Pancreas (tissue), 10 donors: ENCODE measurements at regions of chr7 and their contacts with region 1.

Region 1: DNA sequence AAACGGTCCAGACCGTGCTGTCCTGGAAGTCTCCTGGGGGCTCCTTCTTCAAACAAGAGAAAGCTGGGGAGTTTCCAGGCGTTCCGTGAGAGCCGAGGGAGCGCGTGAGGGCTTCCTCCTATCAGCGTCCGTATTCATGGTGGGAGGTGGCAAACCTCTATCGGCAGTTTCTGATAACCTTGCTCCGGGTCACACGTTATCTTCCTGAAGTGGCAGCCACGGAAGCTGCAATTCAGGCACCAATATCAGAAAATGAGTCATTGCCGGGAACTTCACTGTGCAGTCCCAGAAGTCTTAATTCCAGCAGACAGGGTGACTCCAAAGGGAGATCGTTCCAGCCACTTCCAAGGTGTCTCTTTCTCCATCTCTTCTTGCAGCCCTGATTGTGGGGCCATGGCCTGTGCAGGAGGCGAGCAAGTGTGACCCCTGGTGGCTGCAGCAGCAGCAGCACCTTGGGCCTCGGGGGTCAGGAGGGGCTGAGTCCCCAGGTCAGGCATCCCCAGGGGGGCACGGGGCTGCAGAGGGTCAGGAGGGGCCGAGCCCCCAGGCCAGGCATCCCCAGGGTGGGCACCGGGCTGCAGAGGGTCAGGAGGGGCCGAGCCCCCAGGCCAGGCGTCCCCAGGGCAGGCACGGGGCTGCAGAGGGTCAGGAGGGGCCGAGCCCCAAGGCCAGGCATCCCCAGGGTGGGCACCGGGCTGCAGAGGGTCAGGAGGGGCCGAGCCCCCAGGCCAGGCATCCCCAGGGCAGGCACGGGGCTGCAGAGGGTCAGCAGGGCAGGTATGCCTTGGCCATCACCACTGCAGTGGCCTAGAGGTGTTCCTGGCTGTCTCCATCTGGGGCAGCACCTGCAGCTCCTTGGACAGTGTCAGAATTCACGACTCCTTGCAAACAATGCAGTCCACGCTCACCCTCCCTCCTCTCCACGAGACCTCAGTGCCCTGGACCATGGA is 538.7 kb downstream of the DNAJB6 start:
- DNase-seq: no peak
- ATAC-seq: peak in 3 of 4 donors; percentile 36 to 70 (median 70)
- H3K4me3 ChIP-seq: no peak overlapping the region
- H3K27ac ChIP-seq: no peak overlapping the region
- H3K4me1 ChIP-seq: no peaks in the 10 kb centered on the region
- H3K27me3 ChIP-seq: no peaks in the 10 kb centered on the region
- CTCF ChIP-seq: peak in 3 of 4 donors; percentile 13 to 22 (median 21)

Region 2: GRCh38 chr7:157432957-157433576 is 442.4 kb before region 1 on chr7:
- intact Hi-C with region 1: loop called in 1 of 3 experiments (anchors 10 kb)
- DNase-seq: peak in 2 of 6 donors; percentile 34 to 61
- ATAC-seq: peak in 3 of 4 donors; percentile 72 to 77 (median 73)
- H3K4me3 ChIP-seq: peak overlapping the region in 1 of 4 donors; percentile 20
- H3K27ac ChIP-seq: no peak overlapping the region
- H3K4me1 ChIP-seq: no peaks in the 10 kb centered on the region
- H3K27me3 ChIP-seq: no peaks in the 10 kb centered on the region
- CTCF ChIP-seq: peak in 3 of 4 donors; percentile 34 to 53 (median 42)

Region 3: DNA sequence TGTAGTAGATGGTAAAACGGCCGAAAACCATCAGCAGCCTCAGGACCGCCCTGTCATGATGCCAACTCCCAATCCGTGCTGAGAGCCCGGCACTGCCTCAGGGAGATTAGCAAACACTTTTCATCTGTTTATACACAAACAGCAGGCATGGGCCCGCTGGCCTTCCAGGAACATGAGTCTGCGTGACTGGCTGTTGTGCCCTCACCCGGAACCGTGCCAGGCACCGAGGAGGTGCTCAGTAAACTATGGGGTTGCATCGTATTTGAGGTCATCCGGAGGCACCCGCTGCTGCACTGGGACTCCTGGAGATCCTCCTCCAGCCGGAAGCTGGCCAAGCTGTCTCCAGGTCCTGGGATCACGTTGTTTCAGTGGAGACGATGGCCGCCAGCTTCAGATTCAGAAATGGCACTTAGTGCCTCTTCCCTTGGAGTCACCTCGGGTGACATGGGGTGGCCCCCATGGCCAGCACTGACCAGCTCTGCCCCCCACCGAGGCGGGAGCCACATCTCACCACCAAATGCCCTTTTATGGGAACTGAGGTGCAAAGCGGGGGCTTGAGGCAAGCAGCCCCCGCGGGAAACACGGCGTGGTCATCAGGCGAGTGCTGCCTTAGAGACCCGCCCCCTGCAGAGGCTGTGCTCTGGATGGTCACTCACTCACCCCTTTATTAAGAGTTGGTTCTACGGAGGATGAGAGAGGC is 126.3 kb after region 1 on chr7:
- intact Hi-C with region 1: no loop called
- DNase-seq: peak in 2 of 6 donors; percentile 14 to 58
- ATAC-seq: peak in 2 of 4 donors; percentile 61 to 65
- H3K4me3 ChIP-seq: no peak overlapping the region
- H3K27ac ChIP-seq: no peak overlapping the region
- H3K4me1 ChIP-seq: no peaks in the 10 kb centered on the region
- H3K27me3 ChIP-seq: no peaks in the 10 kb centered on the region
- CTCF ChIP-seq: no peak